ENCODE measurements at regions of chr15 and their contacts with region 1.

Region 1: DNA sequence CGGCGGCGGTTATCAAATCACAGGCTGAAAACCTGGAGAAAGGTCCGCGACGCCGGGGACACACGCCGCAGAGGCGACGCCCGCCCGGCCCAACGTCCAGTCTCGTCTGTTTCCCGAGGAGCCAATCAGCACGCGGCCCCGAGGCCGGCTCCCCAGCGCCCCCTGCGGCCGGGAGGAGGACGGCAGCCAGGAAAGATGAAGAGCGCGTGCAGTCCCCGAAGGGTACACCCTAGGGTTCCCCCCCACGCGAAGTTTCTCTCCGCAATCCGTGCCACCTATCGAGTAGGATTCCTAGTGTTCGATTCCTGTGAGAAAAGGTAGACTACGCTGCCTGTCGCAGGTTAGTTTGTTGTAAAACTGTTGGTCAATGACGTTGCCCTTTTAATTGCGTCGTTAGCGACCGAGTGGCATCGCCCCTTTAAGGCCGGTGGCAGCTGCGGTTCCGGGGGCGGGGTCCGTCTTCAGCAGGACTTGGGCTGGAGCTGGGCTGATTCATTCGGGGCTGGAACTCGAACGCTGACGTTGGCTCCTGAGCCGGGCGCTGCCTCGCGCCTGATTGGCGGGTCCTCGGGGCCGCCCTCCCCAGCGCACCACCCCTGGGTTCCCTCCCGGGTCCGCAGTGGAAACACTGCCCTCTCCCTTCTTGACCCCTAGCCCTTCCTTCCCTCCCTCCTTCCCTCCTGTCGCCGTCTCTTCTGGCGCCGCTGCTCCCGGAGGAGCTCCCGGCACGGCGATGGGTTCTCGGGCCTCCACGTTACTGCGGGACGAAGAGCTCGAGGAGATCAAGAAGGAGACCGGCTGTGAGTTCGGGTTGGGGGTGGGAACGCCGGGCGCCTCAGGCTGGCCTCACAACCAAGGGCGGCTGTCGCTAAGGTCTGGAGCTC is at the starts of genes CHP1 and EXD1:
- DNase-seq: peak; percentile 97
- ATAC-seq: peak; percentile 99
- H3K4me3 ChIP-seq: peak within 1 kb of the TSS; percentile 90
- H3K27ac ChIP-seq: peak within 1 kb of the TSS; percentile 94
- H3K4me1 ChIP-seq: peaks cover 10% of the 10 kb centered on the region
- H3K27me3 ChIP-seq: 0 out of 2 replicates have a peak, but pooled peaks cover 1% of the 10 kb centered on the region
- CTCF ChIP-seq: peak; percentile 88
- POLR2A ChIP-seq: peak; percentile 74
- RAD21 ChIP-seq: peak; percentile 25; the same call in 1 of the 2 replicates
- total RNA-seq, gene CHP1: 94.2 and 96.1 TPM in 2 replicates
- total RNA-seq, gene EXD1: not detected in 2 replicates

Region 2: DNA sequence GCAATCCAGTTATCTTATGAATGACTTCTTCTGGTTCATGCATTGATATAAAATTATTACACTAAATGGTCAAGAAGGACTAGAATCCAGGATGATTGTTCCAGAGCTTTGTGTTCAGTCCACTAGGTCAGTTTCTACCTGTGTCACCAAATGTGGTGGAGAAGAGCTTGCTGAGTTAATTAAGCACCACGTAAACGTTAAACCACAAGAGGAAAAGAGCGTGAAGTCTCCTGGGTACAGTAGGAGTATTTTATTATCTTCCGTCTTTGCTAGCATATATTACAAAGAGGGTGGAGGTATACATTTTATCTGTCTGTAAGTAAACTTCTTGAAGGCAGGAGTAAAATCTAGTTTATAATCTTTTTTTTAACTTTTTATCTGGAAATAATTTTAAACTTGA is 23.7 kb after region 1 on chr15:
- CTCF ChIA-PET with region 1: no interaction called
- POLR2A ChIA-PET with region 1: interaction called, 11 read pairs
- dilution Hi-C with region 1: no loop called
- in situ Hi-C with region 1: no loop called
- intact Hi-C with region 1: no loop called
- DNase-seq: no peak
- ATAC-seq: no peak
- H3K4me3 ChIP-seq: no peak overlapping the region
- H3K27ac ChIP-seq: no peak overlapping the region
- H3K4me1 ChIP-seq: peaks cover 1% of the 10 kb centered on the region; the same call in 1 of the 2 replicates
- H3K27me3 ChIP-seq: no peaks in the 10 kb centered on the region
- CTCF ChIP-seq: no peak
- POLR2A ChIP-seq: no peak
- RAD21 ChIP-seq: no peak

Region 3: DNA sequence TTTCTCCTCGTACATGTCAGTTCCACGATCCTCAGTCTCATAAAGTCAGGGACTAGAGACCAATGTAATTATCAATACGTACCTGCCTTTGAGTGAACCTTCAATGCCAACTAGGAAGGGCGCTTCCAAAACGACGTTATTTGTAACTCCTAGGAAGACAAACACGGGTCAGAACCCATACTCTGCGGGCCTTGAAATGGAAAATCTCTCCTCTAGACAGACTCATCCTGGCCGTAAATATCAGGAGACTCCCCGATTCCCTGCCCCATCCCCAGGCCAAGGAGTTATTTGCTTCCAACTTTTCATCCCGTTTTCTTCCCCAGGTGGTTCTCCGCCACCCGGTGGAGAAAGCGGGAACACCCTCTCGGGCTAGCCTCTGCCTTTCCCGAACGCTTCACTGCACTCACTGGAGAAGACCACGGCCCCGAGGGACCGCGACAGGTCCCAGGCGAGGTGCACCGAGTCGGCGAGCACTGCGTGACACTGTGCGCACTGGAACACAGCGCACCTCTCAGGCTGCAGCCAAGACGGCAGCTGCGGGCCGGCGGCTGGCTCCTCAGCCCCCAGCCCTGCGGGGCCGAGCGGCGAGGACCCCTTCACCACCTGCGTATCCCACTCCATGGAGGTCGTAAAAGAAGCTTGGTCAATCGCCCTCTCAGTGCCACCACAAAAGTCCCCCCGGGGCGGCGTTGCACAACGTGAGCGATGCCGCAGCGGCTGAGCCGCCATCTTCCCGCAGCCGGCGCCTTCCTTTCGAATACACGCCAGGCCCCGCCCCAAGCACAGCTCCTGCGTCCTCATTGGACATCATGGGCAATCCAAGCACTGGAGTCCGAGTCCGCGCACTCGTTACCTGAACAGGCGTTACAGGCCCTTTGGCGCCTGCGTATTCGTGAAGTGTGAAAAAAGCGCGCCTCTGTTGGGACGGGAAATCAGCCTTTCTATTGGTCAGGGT is 101.2 kb after region 1 on chr15 and contains the start of gene OIP5:
- CTCF ChIA-PET with region 1: no interaction called
- POLR2A ChIA-PET with region 1: interaction called, 7 read pairs
- dilution Hi-C with region 1: no loop called
- in situ Hi-C with region 1: no loop called
- intact Hi-C with region 1: loop called (anchors 5 kb)
- DNase-seq: peak; percentile 100
- ATAC-seq: peak; percentile 98
- H3K4me3 ChIP-seq: peak within 1 kb of the TSS; percentile 70
- H3K27ac ChIP-seq: peak within 1 kb of the TSS; percentile 45; the same call in 1 of the 2 replicates
- H3K4me1 ChIP-seq: no peaks in the 10 kb centered on the region
- H3K27me3 ChIP-seq: no peaks in the 10 kb centered on the region
- CTCF ChIP-seq: peak; percentile 64
- POLR2A ChIP-seq: 0 out of 2 replicates have a peak, but pooled peaks have one; percentile 12
- RAD21 ChIP-seq: peak; percentile 69
- total RNA-seq, gene OIP5: 4.1 and 7.5 TPM in 2 replicates

Region 4: GRCh38 chr15:41416742-41417406 is 186.0 kb after region 1 on chr15 and contains the start of gene RTF1:
- CTCF ChIA-PET with region 1: no interaction called
- POLR2A ChIA-PET with region 1: no interaction called
- dilution Hi-C with region 1: no loop called
- in situ Hi-C with region 1: no loop called
- intact Hi-C with region 1: loop called (anchors 10 kb)
- DNase-seq: peak; percentile 80
- ATAC-seq: peak; percentile 95
- H3K4me3 ChIP-seq: peak within 1 kb of the TSS; percentile 95
- H3K27ac ChIP-seq: peak within 1 kb of the TSS; percentile 88
- H3K4me1 ChIP-seq: 0 out of 2 replicates have a peak, but pooled peaks cover 5% of the 10 kb centered on the region
- H3K27me3 ChIP-seq: no peaks in the 10 kb centered on the region
- CTCF ChIP-seq: no peak
- POLR2A ChIP-seq: peak; percentile 81
- RAD21 ChIP-seq: no peak
- total RNA-seq, gene RTF1: 15.1 and 17.8 TPM in 2 replicates